Heart left ventricle (tissue), 16 donors: ENCODE measurements at regions of chr5 and their contacts with region 1.

Region 1: DNA sequence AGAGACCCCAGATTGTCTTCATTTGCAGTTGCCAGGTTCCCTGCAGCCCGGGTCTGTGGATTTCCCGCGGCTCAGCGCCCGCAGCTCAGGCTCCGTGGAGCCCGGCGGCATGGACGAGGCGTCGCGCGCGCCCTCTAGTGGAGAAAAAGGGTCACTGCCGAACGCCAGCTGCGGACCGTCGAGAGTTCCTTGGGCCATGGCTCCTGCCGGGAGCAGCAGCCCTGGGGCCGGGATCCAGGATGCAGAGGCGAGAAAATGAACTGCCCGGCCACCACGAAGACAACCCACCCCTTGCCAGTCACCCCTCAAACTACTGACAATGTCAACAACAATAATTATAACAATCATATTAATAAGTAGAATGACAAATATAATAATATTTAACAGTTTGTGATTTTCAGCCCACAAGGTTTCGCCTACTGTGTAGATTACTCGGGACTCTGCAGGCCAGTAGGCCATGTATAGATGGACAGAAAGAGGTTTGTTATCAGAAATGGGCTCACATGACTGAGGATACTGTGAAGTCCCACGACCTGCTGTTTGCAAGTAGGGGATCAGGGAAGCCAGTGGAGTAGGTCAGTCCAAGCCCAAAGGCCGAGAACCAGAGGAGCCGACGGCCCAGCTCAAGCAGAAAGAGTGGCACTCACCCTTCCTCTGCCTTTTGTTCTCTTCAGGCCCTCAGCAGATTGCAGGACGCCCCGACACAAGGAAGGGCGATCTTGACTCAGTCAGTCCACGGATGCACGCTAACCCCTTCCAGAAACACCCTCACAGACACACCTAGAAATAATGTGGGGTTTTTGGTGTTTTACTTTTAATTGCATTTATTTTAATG is 43.1 kb downstream of the BOD1 start:
- DNase-seq: peak; percentile 64 to 90 (median 76)
- ATAC-seq: peak; percentile 84 to 96 (median 90)
- H3K4me3 ChIP-seq: peak overlapping the region in 3 of 12 donors; percentile 17 to 36 (median 26)
- H3K27ac ChIP-seq: no peak overlapping the region
- H3K4me1 ChIP-seq: peaks cover 0 to 18% (median 4%) of the 10 kb centered on the region in 12 donors
- H3K27me3 ChIP-seq: peaks cover 0 to 5% (median 0%) of the 10 kb centered on the region in 9 donors
- CTCF ChIP-seq: peak; percentile 90 to 99 (median 96)
- POLR2A ChIP-seq: no peak

Region 2: GRCh38 chr5:173178369-173178910 is 394.9 kb before region 1 on chr5:
- intact Hi-C with region 1: loop called in 1 of 10 experiments (anchors 10 kb)
- DNase-seq: no peak
- ATAC-seq: no peak
- H3K4me3 ChIP-seq: no peak overlapping the region
- H3K27ac ChIP-seq: no peak overlapping the region
- H3K4me1 ChIP-seq: no peaks in the 10 kb centered on the region
- H3K27me3 ChIP-seq: no peaks in the 10 kb centered on the region
- CTCF ChIP-seq: no peak
- POLR2A ChIP-seq: no peak

Region 3: DNA sequence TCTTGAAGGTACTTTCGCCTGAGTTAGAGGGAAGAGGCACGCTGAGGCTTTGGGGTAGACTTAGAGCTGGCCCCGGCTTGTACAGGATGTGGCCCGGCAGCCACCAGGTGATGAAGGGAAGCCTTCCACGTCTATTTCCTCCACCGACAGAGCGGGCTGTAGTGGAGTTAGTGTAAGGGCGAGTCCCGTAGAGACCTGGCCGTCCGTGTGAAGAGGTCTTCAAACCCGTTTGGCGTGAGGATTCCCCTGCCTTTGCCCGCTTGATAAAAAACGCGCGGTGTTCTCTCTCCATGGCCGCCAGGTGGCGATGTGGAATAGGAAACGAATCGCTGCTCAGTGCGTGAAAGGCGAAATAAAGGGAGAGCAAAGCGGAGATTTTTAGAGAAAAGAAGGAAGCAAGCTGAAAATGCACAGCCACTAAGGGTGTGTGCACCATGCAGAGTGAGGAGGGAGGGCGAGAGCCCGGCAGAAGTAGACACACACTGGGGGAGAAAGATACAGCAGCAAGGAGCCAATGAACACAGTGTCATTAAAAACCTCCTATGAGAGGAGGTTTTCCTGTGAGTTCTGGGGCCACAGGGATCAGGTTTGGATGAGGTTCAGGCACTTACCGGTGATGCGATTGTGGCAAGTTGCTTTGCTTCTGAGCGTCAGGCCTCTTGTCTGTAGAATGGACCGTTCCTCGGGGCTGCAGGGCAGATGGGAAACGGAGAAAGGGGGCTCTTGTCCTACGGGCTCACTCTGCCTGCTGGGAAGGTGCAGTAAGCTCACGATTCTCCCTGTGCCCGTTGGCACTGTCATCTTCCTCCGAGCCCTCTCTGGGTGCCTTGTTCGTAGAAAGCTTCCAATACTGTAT is 279.3 kb before region 1 on chr5:
- intact Hi-C with region 1: loop called (anchors 1 to 5 kb)
- DNase-seq: peak; percentile 60 to 86 (median 72)
- ATAC-seq: peak; percentile 11 to 65 (median 46)
- H3K4me3 ChIP-seq: peak overlapping the region in 5 of 12 donors; percentile 5 to 32 (median 11)
- H3K27ac ChIP-seq: no peak overlapping the region
- H3K4me1 ChIP-seq: peaks cover 0 to 21% (median 8%) of the 10 kb centered on the region in 12 donors
- H3K27me3 ChIP-seq: peaks cover 0 to 28% (median 0%) of the 10 kb centered on the region in 9 donors
- CTCF ChIP-seq: peak; percentile 77 to 96 (median 86)
- POLR2A ChIP-seq: no peak

Region 4: DNA sequence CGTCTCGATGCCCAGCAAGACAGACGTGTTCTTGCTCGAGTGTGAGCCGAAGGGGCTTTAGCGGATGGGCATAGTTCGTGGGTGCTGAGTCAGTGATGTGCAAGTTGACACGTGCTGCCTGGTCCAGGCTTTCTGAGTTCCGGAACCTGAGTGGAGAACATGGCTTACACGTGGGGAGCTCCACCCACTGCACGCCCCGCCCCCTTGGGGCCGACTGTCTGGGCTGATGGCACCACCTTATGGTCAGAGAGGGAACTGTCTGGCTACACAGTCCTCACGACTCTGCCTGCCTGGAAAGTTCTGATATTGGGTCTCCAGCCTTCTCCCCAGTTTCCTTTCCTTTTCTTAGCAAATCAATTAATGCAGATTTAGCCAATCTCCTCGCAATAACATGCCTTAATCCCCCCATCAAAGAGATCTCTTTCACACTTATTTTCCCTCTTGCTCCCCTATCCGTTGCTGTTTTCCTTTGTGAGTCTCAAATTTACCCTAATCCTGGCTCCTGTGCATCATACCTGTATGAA is 241.3 kb before region 1 on chr5:
- intact Hi-C with region 1: loop called in 3 of 10 experiments (anchors 10 kb)
- DNase-seq: peak; percentile 78 to 89 (median 85)
- ATAC-seq: peak; percentile 75 to 81 (median 80)
- H3K4me3 ChIP-seq: no peak overlapping the region
- H3K27ac ChIP-seq: no peak overlapping the region
- H3K4me1 ChIP-seq: peaks cover 0 to 38% (median 22%) of the 10 kb centered on the region in 12 donors
- H3K27me3 ChIP-seq: peaks cover 0 to 41% (median 5%) of the 10 kb centered on the region in 9 donors
- CTCF ChIP-seq: peak; percentile 84 to 97 (median 92)
- POLR2A ChIP-seq: no peak

Region 5: DNA sequence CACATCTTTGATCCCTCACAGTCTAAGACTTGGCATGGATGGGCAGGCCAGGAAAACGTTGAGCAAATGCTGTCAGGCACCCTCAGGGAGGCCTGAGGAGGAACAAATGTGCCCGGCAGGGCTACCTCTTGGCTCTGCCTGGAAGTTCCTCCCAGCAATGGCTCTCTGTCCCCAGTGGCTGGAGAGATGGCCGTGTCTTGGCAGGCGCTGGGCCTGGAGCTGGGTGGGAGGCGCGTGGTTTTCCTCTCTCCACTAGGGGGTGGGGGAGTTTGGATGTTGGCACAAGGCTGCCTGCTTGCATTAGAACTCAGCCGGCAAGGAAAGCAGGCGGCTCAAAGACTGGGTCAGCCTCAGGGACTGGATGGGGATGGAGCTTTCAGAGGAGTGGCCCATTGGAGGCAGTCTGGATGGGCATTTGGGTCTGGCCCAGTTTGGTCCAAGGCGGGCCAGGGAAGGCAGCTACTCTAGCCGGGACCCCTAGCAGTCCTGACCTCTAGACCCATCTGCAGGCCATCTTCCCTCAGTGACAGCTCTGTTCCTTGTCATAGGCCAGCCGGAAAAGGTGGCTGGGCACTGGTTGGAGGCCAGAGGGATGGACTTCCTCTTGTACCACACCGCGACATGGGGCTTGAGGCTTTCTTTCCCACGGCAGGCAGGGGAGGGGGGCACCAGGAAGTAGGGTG is 176.9 kb before region 1 on chr5:
- intact Hi-C with region 1: loop called in 1 of 10 experiments (anchors 10 kb)
- DNase-seq: no peak
- ATAC-seq: peak in 2 of 4 donors; percentile 25 to 49
- H3K4me3 ChIP-seq: no peak overlapping the region
- H3K27ac ChIP-seq: peak overlapping the region in 2 of 12 donors; percentile 33 to 57
- H3K4me1 ChIP-seq: peaks cover 0 to 9% (median 0%) of the 10 kb centered on the region in 12 donors
- H3K27me3 ChIP-seq: no peaks in the 10 kb centered on the region
- CTCF ChIP-seq: peak in 2 of 12 donors; percentile 5 to 16
- POLR2A ChIP-seq: no peak

Region 6: DNA sequence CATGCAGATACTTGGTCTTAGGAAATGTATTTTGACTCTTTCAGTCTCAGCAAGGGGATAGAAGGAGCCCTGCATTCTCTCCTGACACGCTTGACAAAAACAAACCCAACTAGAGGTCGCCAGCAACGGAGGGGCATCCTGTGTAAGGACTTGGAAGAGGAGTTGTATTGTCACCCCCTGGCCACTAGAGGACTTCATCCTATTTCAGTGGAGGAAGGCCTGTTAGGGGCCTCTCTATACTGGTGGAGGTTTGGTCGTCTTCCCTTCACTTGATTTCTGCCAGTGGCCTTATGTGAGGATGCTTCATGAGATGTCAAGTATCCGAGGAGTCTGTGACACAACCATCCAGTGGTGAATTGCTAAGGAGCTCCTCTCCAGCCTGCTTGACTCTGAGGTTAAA is 122.3 kb before region 1 on chr5:
- intact Hi-C with region 1: loop called in 3 of 10 experiments (anchors 5 to 10 kb)
- DNase-seq: no peak
- ATAC-seq: no peak
- H3K4me3 ChIP-seq: no peak overlapping the region
- H3K27ac ChIP-seq: peak overlapping the region in 8 of 12 donors; percentile 34 to 79 (median 68)
- H3K4me1 ChIP-seq: peaks cover 0 to 36% (median 15%) of the 10 kb centered on the region in 12 donors
- H3K27me3 ChIP-seq: no peaks in the 10 kb centered on the region
- CTCF ChIP-seq: peak in 7 of 12 donors; percentile 13 to 45 (median 32)
- POLR2A ChIP-seq: no peak